IMR-90 (cell line): ENCODE measurements at regions of chr12 and their contacts with region 1.

Region 1: GRCh38 chr12:70849265-70849960 is 71.1 kb downstream of the PTPRR start:
- DNase-seq: peak; percentile 0
- ATAC-seq: no peak
- H3K4me3 ChIP-seq: no peak overlapping the region
- H3K27ac ChIP-seq: no peak overlapping the region
- H3K4me1 ChIP-seq: no peaks in the 10 kb centered on the region
- H3K27me3 ChIP-seq: no peaks in the 10 kb centered on the region
- CTCF ChIP-seq: peak; percentile 33
- POLR2A ChIP-seq: no peak
- RAD21 ChIP-seq: no peak

Region 2: GRCh38 chr12:70338526-70338925 is 510.9 kb before region 1 on chr12:
- CTCF ChIA-PET with region 1: no interaction called
- POLR2A ChIA-PET with region 1: no interaction called
- dilution Hi-C with region 1: no loop called
- in situ Hi-C with region 1: no loop called
- intact Hi-C with region 1: no loop called
- DNase-seq: peak; percentile 23
- ATAC-seq: no peak
- H3K4me3 ChIP-seq: no peak overlapping the region
- H3K27ac ChIP-seq: no peak overlapping the region
- H3K4me1 ChIP-seq: no peaks in the 10 kb centered on the region
- H3K27me3 ChIP-seq: no peaks in the 10 kb centered on the region
- CTCF ChIP-seq: no peak
- POLR2A ChIP-seq: no peak
- RAD21 ChIP-seq: no peak

Region 3: DNA sequence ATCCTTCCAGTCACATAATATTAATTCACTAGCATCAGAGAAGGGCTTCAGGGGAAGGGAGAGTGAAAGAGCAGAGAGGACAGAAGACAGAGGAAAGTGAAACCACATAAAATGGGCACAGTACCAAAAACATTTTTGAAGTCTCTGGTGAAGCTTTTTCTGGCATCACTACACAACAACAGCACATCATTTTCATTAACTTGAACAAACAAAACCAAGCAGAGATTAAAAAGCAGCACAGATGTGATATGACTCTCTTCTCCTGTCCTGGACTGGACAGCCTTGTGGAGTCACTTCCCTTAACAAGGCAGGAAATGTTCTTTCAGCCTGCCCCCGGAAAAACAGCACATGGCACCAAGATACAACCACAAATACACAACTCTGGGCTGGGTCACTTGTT is 196.4 kb after region 1 on chr12:
- CTCF ChIA-PET with region 1: no interaction called
- POLR2A ChIA-PET with region 1: no interaction called
- dilution Hi-C with region 1: no loop called
- in situ Hi-C with region 1: no loop called
- intact Hi-C with region 1: no loop called
- DNase-seq: no peak
- ATAC-seq: peak; percentile 17; the same call in 1 of the 2 replicates
- H3K4me3 ChIP-seq: no peak overlapping the region
- H3K27ac ChIP-seq: no peak overlapping the region
- H3K4me1 ChIP-seq: no peaks in the 10 kb centered on the region
- H3K27me3 ChIP-seq: no peaks in the 10 kb centered on the region
- CTCF ChIP-seq: no peak
- POLR2A ChIP-seq: no peak
- RAD21 ChIP-seq: no peak

Region 4: GRCh38 chr12:71075743-71076142 is 226.3 kb after region 1 on chr12:
- CTCF ChIA-PET with region 1: no interaction called
- POLR2A ChIA-PET with region 1: no interaction called
- dilution Hi-C with region 1: no loop called
- in situ Hi-C with region 1: no loop called
- intact Hi-C with region 1: no loop called
- DNase-seq: no peak
- ATAC-seq: no peak
- H3K4me3 ChIP-seq: no peak overlapping the region
- H3K27ac ChIP-seq: no peak overlapping the region
- H3K4me1 ChIP-seq: no peaks in the 10 kb centered on the region
- H3K27me3 ChIP-seq: no peaks in the 10 kb centered on the region
- CTCF ChIP-seq: no peak
- POLR2A ChIP-seq: no peak
- RAD21 ChIP-seq: no peak

Region 5: DNA sequence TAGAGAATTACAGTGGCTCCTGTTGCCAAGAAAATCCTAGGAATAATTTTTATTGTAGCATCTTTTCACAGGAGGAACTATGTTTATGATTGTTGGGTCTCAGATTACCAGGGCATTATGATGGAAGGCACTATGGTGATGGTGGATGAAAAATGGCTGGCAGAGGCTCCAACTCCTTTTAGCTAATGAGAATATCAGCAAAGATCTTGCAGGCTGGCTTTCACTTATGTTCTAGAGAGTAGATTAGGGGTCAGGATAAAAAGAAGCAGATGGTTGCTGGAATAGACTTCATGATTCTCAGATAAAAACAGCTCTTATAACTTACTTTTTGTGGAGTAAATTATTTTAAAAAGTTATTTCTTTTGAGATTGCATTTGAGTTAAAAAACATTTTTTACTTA is 1924.6 kb after region 1 on chr12:
- CTCF ChIA-PET with region 1: no interaction called
- POLR2A ChIA-PET with region 1: no interaction called
- dilution Hi-C with region 1: no loop called
- in situ Hi-C with region 1: no loop called
- intact Hi-C with region 1: loop called (anchors 5 kb)
- DNase-seq: no peak
- ATAC-seq: no peak
- H3K4me3 ChIP-seq: no peak overlapping the region
- H3K27ac ChIP-seq: no peak overlapping the region
- H3K4me1 ChIP-seq: no peaks in the 10 kb centered on the region
- H3K27me3 ChIP-seq: no peaks in the 10 kb centered on the region
- CTCF ChIP-seq: no peak
- POLR2A ChIP-seq: no peak
- RAD21 ChIP-seq: no peak